ENCODE measurements at regions of chr17 and their contacts with region 1.

Region 1: DNA sequence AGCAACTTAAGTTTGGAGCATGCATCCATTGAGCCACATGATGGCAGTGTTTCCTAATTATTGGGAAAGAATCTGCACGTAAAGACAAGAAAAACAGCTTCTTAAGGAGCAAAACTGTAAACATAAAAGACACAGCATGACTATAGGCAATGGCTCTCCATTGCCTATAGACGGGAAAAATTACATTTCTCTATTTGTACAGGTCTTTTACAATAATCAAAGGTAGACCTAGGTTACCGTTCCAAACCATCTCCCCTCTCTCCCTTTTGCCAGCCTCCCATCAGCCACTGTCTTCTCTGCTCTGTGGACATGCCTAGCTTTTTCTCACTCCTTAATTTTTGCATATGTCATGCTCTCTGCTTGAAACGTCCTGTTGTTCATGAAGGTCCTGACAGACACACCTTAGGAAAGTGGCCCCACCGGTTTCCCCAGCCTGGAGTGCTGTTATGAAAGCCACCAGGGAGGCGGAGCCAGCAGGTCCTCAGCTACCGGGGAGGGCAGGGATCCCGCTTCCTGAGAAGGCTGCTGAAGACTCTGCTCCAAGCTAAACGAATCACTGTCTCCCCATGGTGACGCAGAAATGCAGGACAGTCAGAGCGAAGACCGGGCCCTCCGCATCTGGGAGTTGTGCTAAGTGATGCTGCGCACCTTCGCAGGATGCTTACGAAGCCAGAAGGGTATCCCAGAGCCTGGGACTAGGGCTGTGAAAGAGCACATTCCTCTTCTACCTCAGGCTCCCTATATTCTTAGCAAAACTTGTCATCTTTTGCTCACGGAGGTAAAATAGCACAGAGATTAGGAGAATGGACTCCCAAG is 2.2 kb upstream of the SLC16A11 start:
- DNase-seq: peak in 6 of 7 donors; percentile 41 to 69 (median 52)
- H3K4me3 ChIP-seq: peak overlapping the region in 2 of 4 donors; percentile 8 to 40
- H3K27ac ChIP-seq: peak overlapping the region in 3 of 5 donors; percentile 58 to 75 (median 68)
- H3K4me1 ChIP-seq: peaks cover 11 to 34% of the 10 kb centered on the region in 2 donors
- H3K27me3 ChIP-seq: peaks cover 18% of the 10 kb centered on the region
- CTCF ChIP-seq: peak; percentile 40 to 90 (median 87)
- POLR2A ChIP-seq: no peak

Region 2: DNA sequence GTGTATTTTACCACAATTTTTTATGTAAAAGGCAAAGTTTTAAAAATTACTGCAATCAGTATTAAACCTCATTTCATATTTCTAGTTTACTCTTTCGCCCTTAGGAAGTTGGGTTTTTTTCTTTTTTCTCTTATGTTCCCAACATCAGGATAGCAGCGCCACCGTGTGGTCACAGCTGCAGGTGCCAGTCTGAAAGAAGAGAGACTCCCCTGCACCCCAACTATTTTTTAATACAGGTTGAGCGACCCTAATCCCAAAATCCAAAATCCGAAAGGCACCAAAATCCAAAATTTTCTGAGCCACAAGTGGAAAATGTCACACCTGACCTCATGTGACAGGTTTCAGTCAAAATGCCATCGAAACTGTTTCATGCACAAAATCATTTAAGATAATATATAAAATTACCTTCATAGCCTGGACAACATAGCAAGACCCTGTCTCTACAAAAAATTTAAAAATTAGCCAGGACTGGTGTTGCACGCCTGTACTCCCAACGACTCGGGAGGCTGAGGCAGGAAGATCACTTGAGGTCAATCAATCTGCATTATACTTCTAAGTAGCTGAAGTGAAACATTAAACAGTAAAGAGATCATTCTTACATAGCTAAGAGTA is 90.3 kb after region 1 on chr17:
- intact Hi-C with region 1: loop called in 1 of 2 experiments (anchors 5 kb)
- DNase-seq: peak; percentile 69 to 88 (median 76)
- H3K4me3 ChIP-seq: peak overlapping the region in 1 of 4 donors; percentile 21
- H3K27ac ChIP-seq: no peak overlapping the region
- H3K4me1 ChIP-seq: peaks cover 0 to 15% of the 10 kb centered on the region in 2 donors
- H3K27me3 ChIP-seq: peaks cover 8% of the 10 kb centered on the region
- CTCF ChIP-seq: peak; percentile 82 to 95 (median 90)
- POLR2A ChIP-seq: no peak

Measured in adrenal gland (tissue), 19 donors.